Heart left ventricle (tissue), 16 donors: ENCODE measurements at regions of chr19 and their contacts with region 1.

Region 1: DNA sequence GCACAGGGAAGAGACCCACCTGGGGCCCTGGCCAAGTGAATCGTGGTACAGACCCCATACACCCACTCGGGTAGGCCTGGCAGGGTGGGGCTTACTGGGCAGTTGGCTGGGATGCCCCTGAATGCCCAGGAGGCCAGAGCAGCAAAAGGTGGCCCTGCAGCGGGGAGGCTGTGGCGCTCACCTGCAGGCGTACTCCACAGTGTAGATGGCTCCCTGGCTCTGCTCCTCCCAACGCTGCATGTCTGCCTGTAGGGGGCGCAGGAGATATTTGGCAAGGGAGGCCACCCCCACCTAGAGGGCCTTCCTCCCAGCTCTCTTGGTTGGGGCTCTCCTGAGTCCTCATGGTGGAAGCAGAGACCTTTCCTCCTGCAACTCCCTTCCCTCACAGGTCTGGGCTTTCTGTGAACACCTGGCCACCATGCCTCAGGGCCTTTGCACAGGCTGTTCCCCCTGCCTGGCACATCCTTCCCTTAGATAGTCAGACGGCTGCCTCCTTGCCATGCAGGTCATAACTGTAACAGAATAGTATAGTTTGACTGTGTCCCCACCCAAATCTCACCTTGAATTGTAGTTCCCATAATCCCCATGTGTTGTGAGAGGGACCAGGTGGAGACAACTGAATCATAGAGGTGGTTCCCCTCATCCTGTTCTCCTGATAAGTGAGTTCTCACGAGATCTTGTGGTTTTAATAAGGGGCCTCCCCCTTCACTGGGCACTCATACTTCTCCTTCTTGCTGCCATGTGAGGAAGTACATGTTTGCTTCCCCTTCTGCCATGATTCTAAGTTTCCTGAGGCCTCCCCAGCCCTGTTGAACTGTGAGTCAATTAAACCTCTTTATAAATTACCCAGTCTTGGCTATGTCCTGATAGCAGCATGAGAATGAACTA is 5.9 kb downstream of the BORCS8 start:
- DNase-seq: no peak
- ATAC-seq: peak in 3 of 4 donors; percentile 43 to 55 (median 54)
- H3K4me3 ChIP-seq: no peak overlapping the region
- H3K27ac ChIP-seq: no peak overlapping the region
- H3K4me1 ChIP-seq: peaks cover 2 to 28% (median 21%) of the 10 kb centered on the region in 12 donors
- H3K27me3 ChIP-seq: no peaks in the 10 kb centered on the region
- CTCF ChIP-seq: peak; percentile 15 to 63 (median 40)
- POLR2A ChIP-seq: no peak

Region 2: GRCh38 chr19:19342756-19343322 is 156.7 kb after region 1 on chr19:
- intact Hi-C with region 1: loop called in 1 of 10 experiments (anchors 10 kb)
- DNase-seq: peak; percentile 39 to 76 (median 60)
- ATAC-seq: peak; percentile 62 to 83 (median 76)
- H3K4me3 ChIP-seq: no peak overlapping the region
- H3K27ac ChIP-seq: peak overlapping the region in 1 of 12 donors; percentile 38
- H3K4me1 ChIP-seq: peaks cover 0 to 6% (median 0%) of the 10 kb centered on the region in 12 donors
- H3K27me3 ChIP-seq: no peaks in the 10 kb centered on the region
- CTCF ChIP-seq: peak; percentile 67 to 87 (median 78)
- POLR2A ChIP-seq: no peak